ENCODE measurements at regions of chr11 and their contacts with region 1.

Region 1: GRCh38 chr11:128208329-128209137 is 378.8 kb downstream of the ETS1 start:
- DNase-seq: peak in 1 of 2 donors; percentile 76
- H3K4me3 ChIP-seq: no peak overlapping the region
- H3K27ac ChIP-seq: peak overlapping the region; percentile 55 to 77
- H3K4me1 ChIP-seq: peaks cover 4 to 36% of the 10 kb centered on the region in 2 donors
- H3K27me3 ChIP-seq: no peaks in the 10 kb centered on the region
- CTCF ChIP-seq: no peak

Region 2: DNA sequence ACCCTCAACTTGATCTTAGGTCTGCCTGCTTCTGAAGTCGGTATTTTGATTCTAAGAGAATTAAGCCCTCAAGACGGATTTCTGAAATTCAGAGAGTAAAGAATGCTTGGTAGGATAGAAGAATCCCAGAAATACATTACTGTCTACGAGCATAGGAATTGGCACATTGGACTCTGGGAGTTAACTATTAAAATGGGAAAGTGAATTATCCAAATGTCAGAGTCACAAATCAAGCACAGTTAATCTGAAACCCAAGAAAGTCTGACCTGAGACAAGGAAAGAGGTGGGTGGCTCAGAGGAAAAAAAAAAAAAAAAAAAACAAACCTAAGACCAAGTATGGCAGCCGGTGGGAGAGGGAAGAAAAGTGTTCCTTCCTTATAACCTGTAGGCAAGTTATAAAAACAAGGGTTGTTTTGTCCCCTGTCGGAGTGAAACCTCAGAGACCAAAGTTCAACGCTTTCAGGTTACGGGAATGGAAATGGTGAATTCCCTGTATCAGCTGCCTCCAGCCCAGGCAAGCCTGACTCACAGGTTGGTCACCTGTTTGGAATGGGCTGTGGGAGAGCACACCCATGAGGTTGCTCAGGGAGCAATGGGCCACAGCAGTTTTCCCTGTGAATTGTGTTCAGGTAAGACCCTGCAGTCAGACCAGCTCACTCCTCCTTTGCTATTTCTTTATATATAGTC is 239.8 kb after region 1 on chr11:
- intact Hi-C with region 1: loop called (anchors 5 kb)
- DNase-seq: peak in 1 of 2 donors; percentile 69
- H3K4me3 ChIP-seq: no peak overlapping the region
- H3K27ac ChIP-seq: peak overlapping the region; percentile 54 to 69
- H3K4me1 ChIP-seq: peaks cover 10 to 22% of the 10 kb centered on the region in 2 donors
- H3K27me3 ChIP-seq: no peaks in the 10 kb centered on the region
- CTCF ChIP-seq: no peak

Region 3: DNA sequence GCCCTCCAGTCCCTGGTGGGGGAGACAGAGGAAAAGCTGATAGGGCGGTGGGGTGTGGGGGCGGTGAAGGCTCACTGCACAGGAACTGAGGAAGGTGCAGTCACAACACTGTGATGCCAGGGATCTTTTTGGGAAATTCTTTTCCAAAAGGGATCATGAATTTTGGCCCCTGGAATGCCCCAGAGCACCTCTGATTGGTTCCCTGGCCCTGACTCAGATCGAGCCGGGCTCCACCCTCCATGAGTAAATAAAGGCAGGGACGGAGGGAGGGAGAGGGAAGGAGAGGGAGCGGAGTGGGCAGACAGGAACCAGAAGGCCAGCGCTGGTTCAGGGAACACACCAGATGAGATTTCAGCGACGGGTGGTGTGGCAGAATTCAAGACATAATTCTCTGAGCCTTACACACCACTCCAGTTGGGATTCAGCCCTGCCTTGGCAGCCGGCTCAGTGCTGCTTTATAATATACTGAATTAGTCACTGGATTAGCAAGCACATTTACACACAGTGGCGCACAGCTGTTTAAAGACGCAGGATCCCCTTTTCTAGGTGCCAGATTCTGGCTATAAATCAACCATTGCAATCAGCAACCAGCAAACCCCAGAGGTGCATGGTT is 298.6 kb after region 1 on chr11:
- intact Hi-C with region 1: loop called (anchors 5 kb)
- DNase-seq: peak; percentile 83 to 96
- H3K4me3 ChIP-seq: peak overlapping the region; percentile 9 to 59
- H3K27ac ChIP-seq: peak overlapping the region; percentile 84 to 94
- H3K4me1 ChIP-seq: peaks cover 22 to 59% of the 10 kb centered on the region in 2 donors
- H3K27me3 ChIP-seq: no peaks in the 10 kb centered on the region
- CTCF ChIP-seq: no peak